Posterior vena cava (tissue), 2 donors: ENCODE measurements at regions of chr6 and their contacts with region 1.

Region 1: DNA sequence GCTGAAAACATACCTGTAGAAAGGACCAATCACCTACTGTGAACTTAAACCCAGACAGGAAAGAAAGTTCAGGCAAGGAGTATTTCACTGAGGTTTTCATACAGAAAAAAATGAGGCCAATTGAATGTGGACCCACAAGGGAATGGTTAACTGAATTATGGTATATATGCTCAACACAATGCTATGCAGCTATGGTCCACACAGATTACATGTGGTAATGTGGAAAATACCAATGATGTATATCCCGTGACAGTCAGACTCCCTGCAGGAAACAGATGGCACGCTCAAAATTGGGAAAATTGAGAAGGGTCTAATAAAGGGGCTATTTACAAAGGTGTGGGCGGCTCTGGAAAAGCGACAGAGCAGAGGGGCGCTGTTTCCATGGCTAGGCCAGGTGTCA is 47.1 kb upstream of the PIM1 start:
- DNase-seq: no peak

Region 2: GRCh38 chr6:37059344-37060206 is 63.3 kb before region 1 on chr6:
- intact Hi-C with region 1: loop called in 1 of 2 experiments (anchors 5 kb)
- DNase-seq: peak; percentile 91